Activated CD4-positive, alpha-beta T cell treated with anti-CD3 and anti-CD28 coated beads for 36 hours (primary cell): ENCODE measurements at regions of chr1 and their contacts with region 1.

Region 1: DNA sequence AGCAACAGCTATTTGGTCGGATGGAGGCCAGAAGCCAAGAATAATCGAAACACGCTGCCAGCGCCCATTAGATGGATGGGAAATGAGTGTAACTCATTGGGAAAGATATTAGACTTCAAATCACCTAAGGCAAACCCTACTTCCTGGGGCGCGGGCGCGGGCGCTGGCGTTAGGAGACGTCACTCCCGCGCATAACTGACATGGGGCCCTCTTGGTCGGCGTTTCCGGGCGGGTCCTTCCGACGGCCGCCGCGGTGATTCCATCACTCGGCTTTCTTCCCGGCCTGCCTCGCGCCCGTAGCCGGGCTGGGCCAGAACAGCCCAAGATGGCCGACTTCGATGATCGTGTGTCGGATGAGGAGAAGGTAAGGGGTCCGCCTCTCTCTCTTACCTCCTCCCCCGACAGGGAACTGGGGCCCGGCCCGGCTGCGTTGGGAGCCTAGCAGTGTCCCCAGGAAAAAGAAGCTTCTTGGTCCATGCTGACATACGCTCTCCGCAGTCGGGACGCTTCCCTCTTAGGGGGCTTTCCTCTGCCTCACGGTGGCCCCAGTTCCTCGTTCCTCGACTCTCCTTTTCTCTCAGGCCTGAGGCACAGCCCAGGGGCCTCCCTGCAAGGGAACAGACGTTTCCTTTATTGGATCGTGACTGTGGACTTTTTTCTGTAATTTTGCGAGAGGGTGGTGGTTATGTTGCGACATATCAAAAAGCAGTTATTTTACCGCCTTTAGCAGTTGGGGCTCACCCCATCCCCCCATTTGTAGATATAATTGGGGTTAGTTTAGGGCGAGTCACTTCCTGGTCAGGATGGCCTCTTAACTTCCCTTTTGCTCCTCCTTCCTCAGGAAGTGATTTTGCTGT is at the start of gene CAPZA1:
- DNase-seq: peak; percentile 95
- ATAC-seq: peak; percentile 85
- H3K4me3 Mint-ChIP-seq: peak within 1 kb of the TSS; percentile 99
- H3K27ac Mint-ChIP-seq: peak within 1 kb of the TSS; percentile 100
- H3K4me1 Mint-ChIP-seq: peaks cover 34% of the 10 kb centered on the region
- H3K27me3 Mint-ChIP-seq: no peaks in the 10 kb centered on the region
- total RNA-seq, gene CAPZA1: 251 to 302 TPM

Region 2: GRCh38 chr1:111139956-111140679 is 1479.6 kb before region 1 on chr1 and contains the starts of genes CEPT1 and DRAM2:
- CTCF ChIA-PET with region 1: no interaction called
- POLR2A ChIA-PET with region 1: no interaction called
- intact Hi-C with region 1: loop called in 1 of 2 experiments (anchors 5 kb)
- DNase-seq: peak; percentile 98
- ATAC-seq: peak; percentile 78
- H3K4me3 Mint-ChIP-seq: peak within 1 kb of the TSS; percentile 95
- H3K27ac Mint-ChIP-seq: peak within 1 kb of the TSS; percentile 99
- H3K4me1 Mint-ChIP-seq: peaks cover 53% of the 10 kb centered on the region
- H3K27me3 Mint-ChIP-seq: no peaks in the 10 kb centered on the region
- total RNA-seq, gene CEPT1: 34.7 to 49.1 TPM
- total RNA-seq, gene DRAM2: 30.4 to 34.4 TPM

Region 3: GRCh38 chr1:112390775-112391602 is 228.8 kb before region 1 on chr1:
- CTCF ChIA-PET with region 1: interaction called, 6 read pairs
- POLR2A ChIA-PET with region 1: interaction called, 3 read pairs
- intact Hi-C with region 1: loop called (anchors 1 to 2 kb)
- DNase-seq: peak; percentile 89
- ATAC-seq: peak; percentile 76
- H3K4me3 Mint-ChIP-seq: peak overlapping the region; percentile 70
- H3K27ac Mint-ChIP-seq: no peak overlapping the region
- H3K4me1 Mint-ChIP-seq: peaks cover 32% of the 10 kb centered on the region
- H3K27me3 Mint-ChIP-seq: peaks cover 22% of the 10 kb centered on the region

Region 4: DNA sequence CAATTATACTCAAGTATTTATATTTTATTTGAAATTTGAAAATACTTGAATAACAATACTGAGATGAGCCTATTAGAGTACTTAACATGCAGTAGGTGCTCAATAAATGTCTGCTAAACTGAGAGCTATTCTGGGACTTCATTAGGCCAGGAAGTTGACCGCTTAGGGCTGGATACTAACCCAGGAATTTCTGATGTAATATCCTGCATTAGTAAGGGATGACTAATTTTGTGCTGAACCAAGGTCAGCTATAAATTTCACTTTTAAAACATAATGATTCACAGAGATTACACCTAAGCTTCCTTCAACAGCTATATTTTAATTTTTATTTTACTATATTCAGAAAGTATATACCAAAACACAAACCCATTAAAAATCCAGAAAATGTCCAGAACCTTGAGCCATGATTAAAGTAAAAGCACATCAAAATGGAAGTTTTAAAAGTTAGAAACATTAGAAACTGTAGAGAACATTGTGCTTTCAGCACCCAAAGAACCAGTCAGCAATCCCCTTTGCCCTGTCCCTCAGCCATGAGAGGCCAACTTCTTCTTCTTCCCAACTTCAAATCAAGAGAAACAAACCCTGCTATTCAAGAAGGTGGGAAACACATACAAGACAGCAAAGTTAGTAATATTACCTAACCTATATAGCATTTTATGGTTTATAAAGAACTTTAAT is 75.6 kb before region 1 on chr1:
- CTCF ChIA-PET with region 1: no interaction called
- POLR2A ChIA-PET with region 1: no interaction called
- intact Hi-C with region 1: no loop called
- DNase-seq: no peak
- ATAC-seq: no peak
- H3K4me3 Mint-ChIP-seq: no peak overlapping the region
- H3K27ac Mint-ChIP-seq: no peak overlapping the region
- H3K4me1 Mint-ChIP-seq: peaks cover 2% of the 10 kb centered on the region
- H3K27me3 Mint-ChIP-seq: no peaks in the 10 kb centered on the region

Region 5: GRCh38 chr1:112666946-112667345 is 47.2 kb after region 1 on chr1:
- CTCF ChIA-PET with region 1: interaction called, 3 read pairs
- POLR2A ChIA-PET with region 1: interaction called, 4 read pairs
- intact Hi-C with region 1: loop called in 1 of 2 experiments (anchors 1 kb)
- DNase-seq: no peak
- ATAC-seq: peak; percentile 69
- H3K4me3 Mint-ChIP-seq: no peak overlapping the region
- H3K27ac Mint-ChIP-seq: peak overlapping the region; percentile 82
- H3K4me1 Mint-ChIP-seq: peaks cover 34% of the 10 kb centered on the region
- H3K27me3 Mint-ChIP-seq: no peaks in the 10 kb centered on the region

Region 6: GRCh38 chr1:112955781-112956543 is 336.2 kb after region 1 on chr1 and contains the start of gene SLC16A1:
- CTCF ChIA-PET with region 1: no interaction called
- POLR2A ChIA-PET with region 1: no interaction called
- intact Hi-C with region 1: loop called (anchors 1 to 2 kb)
- DNase-seq: peak; percentile 96
- ATAC-seq: peak; percentile 75
- H3K4me3 Mint-ChIP-seq: peak within 1 kb of the TSS; percentile 97
- H3K27ac Mint-ChIP-seq: peak within 1 kb of the TSS; percentile 100
- H3K4me1 Mint-ChIP-seq: peaks cover 56% of the 10 kb centered on the region
- H3K27me3 Mint-ChIP-seq: no peaks in the 10 kb centered on the region
- total RNA-seq, gene SLC16A1: 70.0 to 70.4 TPM

Region 7: GRCh38 chr1:113255720-113256347 is 636.1 kb after region 1 on chr1:
- CTCF ChIA-PET with region 1: no interaction called
- POLR2A ChIA-PET with region 1: no interaction called
- intact Hi-C with region 1: no loop called
- DNase-seq: no peak
- ATAC-seq: no peak
- H3K4me3 Mint-ChIP-seq: no peak overlapping the region
- H3K27ac Mint-ChIP-seq: no peak overlapping the region
- H3K4me1 Mint-ChIP-seq: no peaks in the 10 kb centered on the region
- H3K27me3 Mint-ChIP-seq: peaks cover 9% of the 10 kb centered on the region